ENCODE measurements at regions of chr6 and their contacts with region 1.

Region 1: DNA sequence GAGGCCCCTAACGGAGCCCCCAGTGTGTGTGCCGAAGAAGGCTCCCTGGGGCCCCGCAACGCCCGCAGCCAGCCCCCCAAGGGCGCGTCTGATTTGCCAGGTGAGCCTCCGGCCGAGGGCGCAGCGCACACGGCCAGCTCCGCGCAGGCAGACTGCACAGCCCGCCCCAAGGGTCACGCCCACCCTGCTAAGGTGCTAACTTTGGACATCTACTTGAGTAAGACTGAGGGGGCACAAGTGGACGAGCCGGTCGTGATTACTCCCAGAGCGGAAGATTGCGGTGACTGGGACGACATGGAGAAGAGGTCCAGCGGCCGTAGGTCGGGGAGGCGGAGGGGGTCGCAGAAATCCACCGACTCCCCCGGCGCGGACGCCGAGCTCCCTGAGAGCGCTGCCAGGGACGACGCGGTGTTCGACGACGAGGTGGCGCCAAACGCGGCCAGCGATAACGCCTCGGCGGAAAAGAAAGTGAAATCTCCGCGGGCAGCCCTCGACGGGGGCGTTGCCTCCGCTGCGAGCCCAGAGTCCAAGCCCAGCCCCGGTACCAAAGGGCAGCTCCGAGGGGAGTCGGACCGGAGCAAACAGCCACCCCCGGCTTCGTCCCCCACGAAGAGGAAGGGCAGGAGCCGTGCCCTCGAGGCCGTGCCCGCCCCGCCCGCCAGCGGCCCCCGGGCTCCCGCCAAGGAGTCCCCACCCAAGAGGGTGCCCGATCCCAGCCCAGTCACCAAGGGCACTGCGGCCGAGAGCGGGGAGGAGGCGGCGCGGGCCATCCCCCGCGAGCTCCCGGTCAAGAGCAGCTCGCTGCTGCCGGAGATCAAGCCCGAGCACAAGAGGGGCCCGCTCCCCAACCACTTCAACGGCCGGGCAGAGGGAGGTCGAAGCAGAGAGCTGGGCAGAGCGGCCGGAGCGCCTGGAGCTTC is 117.0 kb downstream of the RTN4IP1 start:
- DNase-seq: peak; percentile 71
- H3K4me3 ChIP-seq: peak overlapping the region; percentile 70 to 79 (median 78)
- H3K27ac ChIP-seq: peak overlapping the region; percentile 39
- H3K4me1 ChIP-seq: peaks cover 33% of the 10 kb centered on the region
- H3K27me3 ChIP-seq: peaks cover 24 to 39% of the 10 kb centered on the region in 2 experiments
- CTCF ChIP-seq: peak in 1 of 2 donors; percentile 52
- POLR2A ChIP-seq: no peak

Region 2: GRCh38 chr6:105992315-105992961 is 519.9 kb before region 1 on chr6:
- CTCF ChIA-PET with region 1: interaction called, 4 read pairs
- POLR2A ChIA-PET with region 1: no interaction called
- dilution Hi-C with region 1: no loop called
- intact Hi-C with region 1: loop called (anchors 5 kb)
- DNase-seq: peak; percentile 76
- H3K4me3 ChIP-seq: peak overlapping the region; percentile 55 to 74 (median 72)
- H3K27ac ChIP-seq: no peak overlapping the region
- H3K4me1 ChIP-seq: peaks cover 22% of the 10 kb centered on the region
- H3K27me3 ChIP-seq: peaks cover 81 to 93% of the 10 kb centered on the region in 2 experiments
- CTCF ChIP-seq: no peak
- POLR2A ChIP-seq: no peak

Region 3: DNA sequence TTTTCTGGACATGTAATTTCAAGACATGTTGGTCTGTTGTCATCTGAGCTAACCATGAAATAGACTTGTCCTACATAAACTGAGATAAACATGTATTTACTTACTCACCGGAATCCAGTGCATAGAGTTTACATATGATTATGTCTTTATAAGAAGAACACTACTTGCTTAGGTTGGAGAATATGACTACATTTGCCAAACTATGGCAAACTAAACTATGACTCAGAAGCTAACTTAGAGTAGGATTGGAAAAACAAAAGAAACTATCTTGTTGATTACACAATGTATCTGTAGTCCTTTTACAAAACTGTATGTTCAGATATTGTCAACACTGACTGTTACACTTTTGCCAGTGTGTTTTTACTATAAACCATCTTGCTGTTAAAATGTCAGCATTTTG is 38.5 kb before region 1 on chr6:
- CTCF ChIA-PET with region 1: interaction called, 4 read pairs
- POLR2A ChIA-PET with region 1: no interaction called
- dilution Hi-C with region 1: no loop called
- intact Hi-C with region 1: loop called (anchors 2 kb)
- DNase-seq: peak; percentile 12
- H3K4me3 ChIP-seq: no peak overlapping the region
- H3K27ac ChIP-seq: no peak overlapping the region
- H3K4me1 ChIP-seq: no peaks in the 10 kb centered on the region
- H3K27me3 ChIP-seq: peaks cover 4 to 5% of the 10 kb centered on the region in 2 experiments
- CTCF ChIP-seq: no peak
- POLR2A ChIP-seq: no peak

Region 4: DNA sequence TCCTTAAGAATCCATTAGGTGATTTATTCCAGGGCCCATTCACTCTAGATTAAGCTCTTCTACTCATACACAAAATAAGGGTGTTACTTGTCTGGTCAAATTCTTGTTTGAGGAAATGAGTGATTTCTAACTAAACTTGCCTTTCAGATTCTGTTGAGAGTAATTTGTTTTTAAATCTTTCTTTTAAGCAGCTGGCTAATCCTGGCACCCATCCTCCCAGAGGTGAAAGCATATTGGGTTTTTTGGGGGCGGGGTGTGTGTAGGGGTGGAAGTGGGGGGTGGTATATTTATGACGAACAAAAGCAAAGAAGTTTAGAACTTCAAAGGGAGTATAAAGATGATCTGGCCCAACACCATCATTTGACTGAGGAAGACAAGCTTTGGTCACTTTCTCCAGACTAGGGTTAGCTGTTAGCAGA is 22.3 kb after region 1 on chr6:
- CTCF ChIA-PET with region 1: interaction called, 13 read pairs
- POLR2A ChIA-PET with region 1: no interaction called
- dilution Hi-C with region 1: no loop called
- intact Hi-C with region 1: no loop called
- DNase-seq: no peak
- H3K4me3 ChIP-seq: no peak overlapping the region
- H3K27ac ChIP-seq: no peak overlapping the region
- H3K4me1 ChIP-seq: peaks cover 21% of the 10 kb centered on the region
- H3K27me3 ChIP-seq: no peaks in the 10 kb centered on the region
- CTCF ChIP-seq: no peak
- POLR2A ChIP-seq: no peak

Region 5: DNA sequence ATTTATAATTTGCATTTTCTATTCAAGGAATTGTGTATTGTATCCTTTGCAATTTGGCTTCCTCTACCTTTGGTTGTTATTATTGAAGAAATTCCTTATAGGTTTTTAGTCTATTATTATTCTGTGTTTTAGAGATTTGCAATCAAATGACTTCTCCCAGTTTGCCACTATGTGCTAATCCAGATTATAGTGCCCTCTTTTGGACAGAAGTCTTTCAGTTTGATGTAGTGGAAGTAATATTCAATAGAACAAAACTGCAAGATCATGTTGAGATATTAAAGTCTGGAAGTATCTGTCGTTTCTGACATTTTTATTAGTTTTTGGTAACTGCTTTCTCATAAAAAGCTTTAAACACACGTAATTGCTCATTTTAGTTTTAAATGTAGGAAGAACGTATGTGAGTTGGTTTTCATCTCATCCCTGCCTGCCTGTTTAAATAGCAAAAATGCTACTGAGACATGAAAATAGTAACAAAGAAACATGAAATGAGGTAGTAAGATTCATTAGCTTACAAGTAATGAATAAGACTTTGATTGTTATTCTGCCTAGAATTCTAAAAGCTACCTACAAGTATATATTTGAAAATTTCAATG is 44.2 kb after region 1 on chr6:
- CTCF ChIA-PET with region 1: interaction called, 29 read pairs
- POLR2A ChIA-PET with region 1: no interaction called
- dilution Hi-C with region 1: no loop called
- intact Hi-C with region 1: loop called (anchors 1 kb)
- DNase-seq: peak; percentile 61
- H3K4me3 ChIP-seq: no peak overlapping the region
- H3K27ac ChIP-seq: no peak overlapping the region
- H3K4me1 ChIP-seq: no peaks in the 10 kb centered on the region
- H3K27me3 ChIP-seq: no peaks in the 10 kb centered on the region
- CTCF ChIP-seq: peak in 1 of 2 donors; percentile 28
- POLR2A ChIP-seq: no peak

Region 6: GRCh38 chr6:106619223-106619622 is 106.9 kb after region 1 on chr6:
- CTCF ChIA-PET with region 1: no interaction called
- POLR2A ChIA-PET with region 1: no interaction called
- dilution Hi-C with region 1: no loop called
- intact Hi-C with region 1: no loop called
- DNase-seq: no peak
- H3K4me3 ChIP-seq: no peak overlapping the region
- H3K27ac ChIP-seq: no peak overlapping the region
- H3K4me1 ChIP-seq: peaks cover 7% of the 10 kb centered on the region
- H3K27me3 ChIP-seq: no peaks in the 10 kb centered on the region
- CTCF ChIP-seq: no peak
- POLR2A ChIP-seq: no peak

Region 7: GRCh38 chr6:106629103-106629858 is 117.0 kb after region 1 on chr6 and contains the starts of genes QRSL1 and RTN4IP1:
- CTCF ChIA-PET with region 1: no interaction called
- POLR2A ChIA-PET with region 1: no interaction called
- dilution Hi-C with region 1: no loop called
- intact Hi-C with region 1: loop called (anchors 5 kb)
- DNase-seq: peak; percentile 96
- H3K4me3 ChIP-seq: peak within 1 kb of the TSS; percentile 71 to 84 (median 80)
- H3K27ac ChIP-seq: peak within 1 kb of the TSS; percentile 63
- H3K4me1 ChIP-seq: peaks cover 6% of the 10 kb centered on the region
- H3K27me3 ChIP-seq: no peaks in the 10 kb centered on the region
- CTCF ChIP-seq: no peak
- POLR2A ChIP-seq: peak; percentile 62
- total RNA-seq, gene QRSL1: 11.3 and 12.4 TPM in 2 replicates
- total RNA-seq, gene RTN4IP1: 5.4 and 5.5 TPM in 2 replicates

Measured in endothelial cell of umbilical vein (primary cell).